ENCODE measurements at regions of chr7 and their contacts with region 1.

Region 1: DNA sequence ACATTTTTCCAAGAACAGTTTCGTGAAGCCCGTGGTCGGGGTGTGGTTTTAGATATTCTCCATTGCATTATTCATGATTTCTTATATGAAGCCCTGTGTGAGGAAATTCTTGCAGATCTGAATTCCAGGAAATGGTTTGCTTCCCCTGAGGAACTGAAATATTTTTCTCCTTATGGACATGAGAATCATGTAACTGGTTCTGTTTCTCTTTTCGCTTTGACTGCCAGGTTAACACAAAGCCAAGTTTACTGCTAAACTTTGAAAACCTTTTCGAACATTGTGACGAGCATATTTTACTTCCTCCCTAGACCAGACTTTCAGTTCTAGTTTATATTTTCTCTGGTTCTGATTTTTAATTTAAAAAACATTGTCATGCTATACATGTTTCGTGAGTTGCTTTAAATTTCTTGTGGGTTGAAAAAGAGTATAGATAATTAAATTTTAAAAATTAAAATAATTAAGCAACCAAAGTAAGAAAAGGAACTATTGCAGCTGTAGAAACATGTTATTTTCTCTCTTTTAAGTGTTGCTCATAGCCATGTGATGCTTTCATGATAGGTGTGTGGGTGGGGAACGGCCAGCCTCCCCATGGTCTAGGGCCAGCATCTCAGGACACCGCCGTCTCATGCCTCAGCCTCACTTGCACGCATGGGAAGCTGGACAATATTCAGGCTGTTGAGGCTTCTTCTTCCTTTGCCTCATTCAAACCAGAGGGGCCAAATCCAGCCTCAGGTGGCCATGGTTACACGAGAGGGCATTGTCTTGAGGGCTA is 97.1 kb downstream of the CREB5 start:
- DNase-seq: peak; percentile 45
- ATAC-seq: peak; percentile 95
- H3K4me3 ChIP-seq: peak overlapping the region; percentile 14; the same call in 1 of the 2 replicates
- H3K27ac ChIP-seq: peak overlapping the region; percentile 70
- H3K4me1 ChIP-seq: peaks cover 17% of the 10 kb centered on the region
- H3K27me3 ChIP-seq: no peaks in the 10 kb centered on the region
- CTCF ChIP-seq: no peak
- EP300 ChIP-seq: peak; percentile 65 to 74
- POLR2A ChIP-seq: peak; percentile 43; the same call in 1 of the 2 replicates
- RAD21 ChIP-seq: peak; percentile 24; the same call in 1 of the 2 replicates

Region 2: GRCh38 chr7:28442540-28443420 is 66.7 kb before region 1 on chr7:
- CTCF ChIA-PET with region 1: no interaction called
- POLR2A ChIA-PET with region 1: no interaction called
- RAD21 ChIA-PET with region 1: interaction called, 3 read pairs
- SMC1A ChIA-PET with region 1: no interaction called
- in situ Hi-C with region 1: no loop called
- intact Hi-C with region 1: loop called (anchors 2 kb)
- DNase-seq: no peak
- ATAC-seq: peak; percentile 92
- H3K4me3 ChIP-seq: no peak overlapping the region
- H3K27ac ChIP-seq: no peak overlapping the region
- H3K4me1 ChIP-seq: no peaks in the 10 kb centered on the region; the same call in 1 of the 2 replicates
- H3K27me3 ChIP-seq: no peaks in the 10 kb centered on the region; a peak in 1 of 4 replicates
- CTCF ChIP-seq: no peak
- EP300 ChIP-seq: peak in 1 of 2 experiments; percentile 63; a peak in 1 of 4 replicates
- POLR2A ChIP-seq: no peak
- RAD21 ChIP-seq: no peak

Region 3: GRCh38 chr7:28520074-28521015 is 10.9 kb after region 1 on chr7:
- CTCF ChIA-PET with region 1: interaction called, 3 read pairs
- POLR2A ChIA-PET with region 1: interaction called, 8 read pairs
- RAD21 ChIA-PET with region 1: interaction called, 5 read pairs
- SMC1A ChIA-PET with region 1: interaction called, 20 read pairs
- in situ Hi-C with region 1: no loop called
- intact Hi-C with region 1: no loop called
- DNase-seq: no peak
- ATAC-seq: no peak
- H3K4me3 ChIP-seq: no peak overlapping the region
- H3K27ac ChIP-seq: no peak overlapping the region
- H3K4me1 ChIP-seq: peaks cover 14% of the 10 kb centered on the region
- H3K27me3 ChIP-seq: no peaks in the 10 kb centered on the region
- CTCF ChIP-seq: no peak
- EP300 ChIP-seq: no peak
- POLR2A ChIP-seq: no peak
- RAD21 ChIP-seq: no peak

Measured in GM12878 (cell line).